Activated B cell treated with CpG ODN at 0.5 μM for 24 hours (primary cell): ENCODE measurements at regions of chr10 and their contacts with region 1.

Region 1: GRCh38 chr10:92689663-92690210 is at the start of gene HHEX:
- DNase-seq: peak; percentile 79
- ATAC-seq: peak; percentile 75
- H3K4me3 Mint-ChIP-seq: peak within 1 kb of the TSS; percentile 86
- H3K27ac Mint-ChIP-seq: peak within 1 kb of the TSS; percentile 92
- H3K4me1 Mint-ChIP-seq: peaks cover 45% of the 10 kb centered on the region
- H3K27me3 Mint-ChIP-seq: no peaks in the 10 kb centered on the region
- CTCF ChIP-seq: no peak
- total RNA-seq, gene HHEX: 50.3 and 55.1 TPM in 2 replicates

Region 2: DNA sequence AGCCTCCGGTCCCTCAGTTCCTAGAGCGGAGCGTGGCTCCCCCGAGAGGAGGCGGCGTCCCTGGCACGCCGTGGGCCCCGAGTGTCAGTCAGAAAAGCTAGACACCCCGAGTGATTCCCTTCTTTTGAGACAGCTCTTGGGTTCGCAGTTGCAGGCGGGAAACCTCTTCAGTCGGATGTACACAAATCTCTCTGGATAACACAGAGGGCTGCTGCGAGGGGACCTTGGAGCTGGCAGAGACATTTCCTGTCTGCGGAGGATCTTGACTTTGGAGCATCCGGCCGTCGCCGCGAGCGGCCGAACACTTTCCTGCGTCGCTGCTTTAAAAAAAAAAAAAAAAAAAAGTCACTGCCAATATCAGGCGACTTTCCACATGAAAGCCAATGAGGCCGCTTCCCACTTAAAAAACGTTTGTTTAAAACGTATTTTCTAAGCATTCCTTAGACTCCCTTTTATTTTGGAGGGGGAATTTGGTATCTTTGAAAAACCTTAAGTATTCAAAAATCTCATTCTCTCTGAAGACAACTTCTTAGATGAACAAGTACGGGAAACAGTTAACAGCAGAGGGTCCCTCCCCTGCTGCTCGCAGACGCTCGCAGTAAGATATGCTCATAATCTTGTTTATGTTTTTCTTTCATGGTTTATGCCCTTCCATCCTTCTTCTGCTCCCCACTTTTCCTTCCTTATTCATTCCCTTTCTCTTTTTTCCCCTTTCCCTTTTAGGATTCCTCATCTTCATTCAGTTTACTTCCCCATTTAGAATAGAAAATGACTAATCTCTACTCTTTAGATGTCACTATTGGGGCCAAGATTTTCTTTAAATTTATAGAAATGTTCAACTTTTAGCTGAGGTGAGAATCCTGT is 10.0 kb after region 1 on chr10:
- CTCF ChIA-PET with region 1: interaction called, 3 read pairs
- POLR2A ChIA-PET with region 1: interaction called, 83 read pairs
- intact Hi-C with region 1: loop called (anchors 1 kb)
- DNase-seq: peak; percentile 46
- ATAC-seq: peak; percentile 64
- H3K4me3 Mint-ChIP-seq: peak overlapping the region; percentile 88
- H3K27ac Mint-ChIP-seq: peak overlapping the region; percentile 85
- H3K4me1 Mint-ChIP-seq: peaks cover 72% of the 10 kb centered on the region
- H3K27me3 Mint-ChIP-seq: no peaks in the 10 kb centered on the region
- CTCF ChIP-seq: no peak

Region 3: DNA sequence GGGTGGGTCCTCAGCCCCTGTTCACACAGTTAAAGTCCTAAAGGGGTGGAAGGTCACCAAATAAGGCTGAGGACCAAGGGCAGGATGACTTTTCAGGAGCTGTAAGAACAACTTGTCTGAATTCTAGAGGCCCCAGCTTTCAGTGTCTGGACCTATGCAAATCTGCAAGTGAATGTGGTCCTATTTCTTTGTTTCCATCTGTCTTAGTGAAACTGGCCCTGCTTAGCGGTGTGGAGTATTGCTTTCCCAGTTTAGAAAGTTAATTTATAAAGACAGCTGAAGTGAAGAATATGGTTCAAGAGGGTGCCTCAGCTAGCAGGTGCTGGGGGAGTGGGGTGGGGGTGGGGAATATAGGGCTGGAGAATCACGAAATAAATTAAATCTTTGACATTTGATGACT is 40.1 kb after region 1 on chr10:
- CTCF ChIA-PET with region 1: no interaction called
- POLR2A ChIA-PET with region 1: interaction called, 12 read pairs
- intact Hi-C with region 1: no loop called
- DNase-seq: no peak
- ATAC-seq: peak; percentile 72
- H3K4me3 Mint-ChIP-seq: no peak overlapping the region
- H3K27ac Mint-ChIP-seq: no peak overlapping the region
- H3K4me1 Mint-ChIP-seq: peaks cover 50% of the 10 kb centered on the region
- H3K27me3 Mint-ChIP-seq: no peaks in the 10 kb centered on the region
- CTCF ChIP-seq: no peak

Region 4: DNA sequence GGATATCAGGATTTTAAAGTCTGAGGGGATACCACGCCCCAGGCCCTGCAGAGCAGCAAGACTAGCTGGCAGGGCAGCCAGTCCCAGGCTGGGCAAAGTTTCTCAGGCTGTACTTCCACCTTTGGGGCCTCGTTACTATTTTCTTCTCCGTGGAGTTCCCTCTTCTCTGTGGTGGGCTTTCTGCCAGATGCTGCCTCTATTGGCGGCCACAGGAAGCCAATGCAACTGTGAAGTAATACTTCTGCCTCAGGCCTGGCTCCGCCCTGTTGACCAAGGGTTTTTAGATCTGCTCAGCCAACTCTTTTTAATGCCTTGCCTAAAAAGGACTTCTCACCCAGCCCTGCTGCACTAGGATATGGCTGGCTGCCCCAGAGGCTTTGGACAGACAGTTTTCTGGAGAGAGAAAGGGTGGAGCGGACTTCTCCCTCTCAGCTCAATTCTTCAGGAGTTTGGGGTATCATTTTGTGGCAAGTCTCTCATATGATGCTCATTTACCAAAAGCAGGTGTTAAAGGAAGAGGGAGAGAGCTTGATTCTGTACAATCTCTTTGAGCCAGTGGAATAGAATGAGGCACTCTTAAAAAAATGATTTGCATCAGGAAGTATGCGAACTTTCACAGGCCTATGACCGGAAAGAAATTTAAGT is 67.5 kb after region 1 on chr10:
- CTCF ChIA-PET with region 1: interaction called, 33 read pairs
- POLR2A ChIA-PET with region 1: interaction called, 138 read pairs
- intact Hi-C with region 1: loop called (anchors 1 kb)
- DNase-seq: peak; percentile 47
- ATAC-seq: peak; percentile 62
- H3K4me3 Mint-ChIP-seq: peak overlapping the region; percentile 76
- H3K27ac Mint-ChIP-seq: peak overlapping the region; percentile 96
- H3K4me1 Mint-ChIP-seq: peaks cover 83% of the 10 kb centered on the region
- H3K27me3 Mint-ChIP-seq: no peaks in the 10 kb centered on the region
- CTCF ChIP-seq: no peak

Region 5: GRCh38 chr10:92848441-92849233 is 158.9 kb after region 1 on chr10 and contains the start of gene EXOC6:
- CTCF ChIA-PET with region 1: interaction called, 16 read pairs
- POLR2A ChIA-PET with region 1: interaction called, 154 read pairs
- intact Hi-C with region 1: loop called (anchors 1 kb)
- DNase-seq: peak; percentile 89
- ATAC-seq: peak; percentile 84
- H3K4me3 Mint-ChIP-seq: peak within 1 kb of the TSS; percentile 87
- H3K27ac Mint-ChIP-seq: peak within 1 kb of the TSS; percentile 87
- H3K4me1 Mint-ChIP-seq: peaks cover 34% of the 10 kb centered on the region
- H3K27me3 Mint-ChIP-seq: no peaks in the 10 kb centered on the region
- CTCF ChIP-seq: no peak
- total RNA-seq, gene EXOC6: 15.3 and 17.3 TPM in 2 replicates

Region 6: GRCh38 chr10:93173967-93174845 is 484.5 kb after region 1 on chr10:
- CTCF ChIA-PET with region 1: no interaction called
- POLR2A ChIA-PET with region 1: no interaction called
- intact Hi-C with region 1: no loop called
- DNase-seq: no peak
- ATAC-seq: no peak
- H3K4me3 Mint-ChIP-seq: no peak overlapping the region
- H3K27ac Mint-ChIP-seq: no peak overlapping the region
- H3K4me1 Mint-ChIP-seq: no peaks in the 10 kb centered on the region
- H3K27me3 Mint-ChIP-seq: peaks cover 5% of the 10 kb centered on the region
- CTCF ChIP-seq: no peak